Panc1 (cell line): ENCODE measurements at regions of chr19 and their contacts with region 1.

Region 1: GRCh38 chr19:38514812-38515633 is 81.5 kb downstream of the RYR1 start:
- DNase-seq: peak; percentile 85
- ATAC-seq: peak; percentile 91
- H3K4me3 ChIP-seq: peak overlapping the region in 1 of 2 experiments; percentile 14; a peak in 2 of 4 replicates
- H3K27ac ChIP-seq: 0 out of 2 replicates have a peak overlapping the region, but pooled peaks have one; percentile 2
- H3K4me1 ChIP-seq: peaks cover 4% of the 10 kb centered on the region; the same call in 1 of the 2 replicates
- H3K27me3 ChIP-seq: no peaks in the 10 kb centered on the region
- CTCF ChIP-seq: no peak

Region 2: GRCh38 chr19:38142176-38143035 is 372.6 kb before region 1 on chr19:
- CTCF ChIA-PET with region 1: no interaction called
- POLR2A ChIA-PET with region 1: no interaction called
- in situ Hi-C with region 1: no loop called
- intact Hi-C with region 1: no loop called
- DNase-seq: peak; percentile 5
- ATAC-seq: peak; percentile 90
- H3K4me3 ChIP-seq: no peak overlapping the region
- H3K27ac ChIP-seq: no peak overlapping the region
- H3K4me1 ChIP-seq: no peaks in the 10 kb centered on the region
- H3K27me3 ChIP-seq: no peaks in the 10 kb centered on the region
- CTCF ChIP-seq: peak; percentile 97

Region 3: GRCh38 chr19:38527466-38528136 is 12.6 kb after region 1 on chr19:
- CTCF ChIA-PET with region 1: interaction called, 10 read pairs
- POLR2A ChIA-PET with region 1: interaction called, 7 read pairs
- in situ Hi-C with region 1: no loop called
- intact Hi-C with region 1: no loop called
- DNase-seq: no peak
- ATAC-seq: peak; percentile 20
- H3K4me3 ChIP-seq: peak overlapping the region in 1 of 2 experiments; percentile 32; a peak in 2 of 4 replicates
- H3K27ac ChIP-seq: no peak overlapping the region
- H3K4me1 ChIP-seq: peaks cover 4% of the 10 kb centered on the region; the same call in 1 of the 2 replicates
- H3K27me3 ChIP-seq: no peaks in the 10 kb centered on the region
- CTCF ChIP-seq: no peak

Region 4: GRCh38 chr19:38640368-38640767 is 125.3 kb after region 1 on chr19:
- CTCF ChIA-PET with region 1: interaction called, 27 read pairs
- POLR2A ChIA-PET with region 1: interaction called, 12 read pairs
- in situ Hi-C with region 1: no loop called
- intact Hi-C with region 1: no loop called
- DNase-seq: no peak
- ATAC-seq: peak; percentile 15
- H3K4me3 ChIP-seq: no peak overlapping the region
- H3K27ac ChIP-seq: no peak overlapping the region
- H3K4me1 ChIP-seq: peaks cover 8% of the 10 kb centered on the region
- H3K27me3 ChIP-seq: no peaks in the 10 kb centered on the region
- CTCF ChIP-seq: no peak

Region 5: DNA sequence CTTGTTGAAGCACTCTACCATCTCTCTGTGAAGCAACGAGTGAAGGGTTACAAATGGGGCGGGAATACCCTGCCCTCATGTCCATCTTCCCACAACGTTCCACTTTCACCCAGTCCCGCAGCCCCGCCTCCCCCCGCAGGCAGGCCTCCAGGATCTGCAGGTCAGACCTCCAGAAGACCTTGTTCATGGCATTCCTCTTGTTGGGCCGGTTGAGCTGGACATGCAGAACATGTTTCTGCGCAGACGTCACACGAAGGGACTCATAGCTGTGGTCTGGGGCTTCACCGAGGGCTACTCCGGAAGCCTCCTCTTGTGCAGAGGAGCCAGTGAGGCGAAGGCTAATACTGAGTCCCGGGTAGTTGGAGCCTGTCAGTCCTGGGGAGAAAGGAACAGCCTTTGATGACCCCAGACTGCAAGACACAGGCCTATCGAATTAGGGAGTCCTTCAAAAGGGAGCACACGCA is 316.2 kb after region 1 on chr19:
- CTCF ChIA-PET with region 1: no interaction called
- POLR2A ChIA-PET with region 1: no interaction called
- in situ Hi-C with region 1: no loop called
- intact Hi-C with region 1: loop called (anchors 10 kb)
- DNase-seq: no peak
- ATAC-seq: peak; percentile 59
- H3K4me3 ChIP-seq: peak overlapping the region; percentile 51 to 78
- H3K27ac ChIP-seq: peak overlapping the region; percentile 97
- H3K4me1 ChIP-seq: peaks cover 55% of the 10 kb centered on the region
- H3K27me3 ChIP-seq: no peaks in the 10 kb centered on the region
- CTCF ChIP-seq: no peak